ENCODE measurements at regions of chr17 and their contacts with region 1.

Region 1: GRCh38 chr17:28612936-28613872 is 781 bp downstream of the RSKR start:
- DNase-seq: peak in 1 of 5 donors; percentile 41
- H3K4me3 ChIP-seq: no peak overlapping the region
- H3K27ac ChIP-seq: no peak overlapping the region
- H3K4me1 ChIP-seq: no peaks in the 10 kb centered on the region
- H3K27me3 ChIP-seq: no peaks in the 10 kb centered on the region
- CTCF ChIP-seq: peak; percentile 12 to 48 (median 38)
- EP300 ChIP-seq: no peak
- POLR2A ChIP-seq: no peak

Region 2: DNA sequence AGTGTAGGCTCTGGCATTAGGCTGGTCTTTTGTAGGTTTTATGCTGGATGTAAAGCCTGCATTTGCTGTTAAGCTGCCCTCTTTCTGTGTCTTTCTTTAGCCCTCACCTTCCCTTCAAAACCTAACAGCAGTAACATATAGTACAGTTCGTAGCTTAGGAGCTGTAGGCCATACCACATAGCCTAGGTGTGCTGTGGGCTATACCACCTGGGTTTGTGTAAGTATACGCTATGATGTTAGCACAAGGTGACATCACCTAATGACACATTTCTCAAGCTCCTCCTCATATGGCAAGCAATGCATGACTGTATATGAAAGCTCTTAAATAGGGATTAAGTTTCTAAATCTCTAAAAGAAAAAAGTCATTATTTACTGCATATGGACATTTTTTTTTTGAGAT is 352.0 kb before region 1 on chr17:
- intact Hi-C with region 1: no loop called
- DNase-seq: no peak
- H3K4me3 ChIP-seq: no peak overlapping the region
- H3K27ac ChIP-seq: no peak overlapping the region
- H3K4me1 ChIP-seq: no peaks in the 10 kb centered on the region
- H3K27me3 ChIP-seq: no peaks in the 10 kb centered on the region
- CTCF ChIP-seq: no peak
- EP300 ChIP-seq: no peak
- POLR2A ChIP-seq: no peak

Region 3: DNA sequence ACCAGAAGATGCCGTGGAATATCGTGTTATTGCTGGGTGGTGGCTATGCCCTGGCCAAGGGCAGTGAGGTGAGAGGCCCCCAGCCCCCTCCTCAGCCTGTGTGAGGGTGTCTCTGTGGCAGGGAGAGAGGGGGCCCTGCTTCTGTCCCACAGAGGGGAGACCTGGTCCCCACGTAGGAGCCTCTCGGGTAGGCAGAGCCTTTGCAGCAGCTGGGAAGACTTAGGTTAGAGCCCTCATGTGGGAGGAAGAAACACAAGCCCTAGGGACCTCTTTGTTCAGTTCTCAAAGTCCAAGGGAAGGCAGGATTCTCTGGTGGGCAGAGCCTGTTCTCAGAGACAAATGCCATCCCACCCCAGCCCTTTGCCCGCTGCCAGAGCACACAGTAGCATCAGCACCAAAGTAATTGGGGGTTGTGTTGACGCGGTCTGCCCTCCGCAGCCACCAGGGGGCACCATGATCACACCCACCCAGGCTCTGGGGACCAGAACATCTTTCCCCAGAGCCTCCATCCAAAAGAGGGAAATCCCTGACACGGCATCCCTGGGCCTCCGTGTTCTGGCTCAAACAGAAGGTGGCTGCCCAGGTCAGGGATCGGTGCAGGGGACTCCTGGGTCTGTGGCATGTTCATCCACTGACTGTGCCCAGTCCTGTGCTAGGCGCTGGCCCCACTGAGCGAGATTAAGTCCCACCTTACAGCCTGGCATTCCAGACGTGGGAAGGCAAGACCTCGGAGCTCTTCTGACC is 118.6 kb before region 1 on chr17:
- intact Hi-C with region 1: loop called in 3 of 4 experiments (anchors 5 kb)
- DNase-seq: peak; percentile 49 to 83 (median 71)
- H3K4me3 ChIP-seq: no peak overlapping the region
- H3K27ac ChIP-seq: no peak overlapping the region
- H3K4me1 ChIP-seq: no peaks in the 10 kb centered on the region
- H3K27me3 ChIP-seq: no peaks in the 10 kb centered on the region
- CTCF ChIP-seq: peak; percentile 45 to 52 (median 47)
- EP300 ChIP-seq: no peak
- POLR2A ChIP-seq: no peak

Region 4: DNA sequence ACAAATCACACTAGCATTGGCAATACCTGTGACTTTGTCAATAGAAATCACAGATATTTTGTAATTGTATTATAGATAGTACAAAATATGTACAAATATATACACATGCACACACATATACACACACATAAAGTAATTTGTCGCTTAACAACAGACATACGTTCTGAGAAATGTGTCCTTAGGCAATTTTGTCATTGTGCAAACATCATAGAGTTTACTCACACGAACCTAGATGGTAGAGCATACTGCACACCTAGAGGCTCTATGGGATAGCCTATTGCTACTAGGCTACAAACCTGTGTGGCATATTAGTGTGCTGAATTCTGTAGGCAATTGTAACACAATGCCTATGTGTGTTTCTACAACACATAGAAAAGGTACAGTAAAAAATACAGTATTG is 71.8 kb before region 1 on chr17:
- intact Hi-C with region 1: no loop called
- DNase-seq: no peak
- H3K4me3 ChIP-seq: no peak overlapping the region
- H3K27ac ChIP-seq: no peak overlapping the region
- H3K4me1 ChIP-seq: no peaks in the 10 kb centered on the region
- H3K27me3 ChIP-seq: no peaks in the 10 kb centered on the region
- CTCF ChIP-seq: no peak
- EP300 ChIP-seq: no peak
- POLR2A ChIP-seq: no peak

Region 5: GRCh38 chr17:28554565-28554964 is 58.6 kb before region 1 on chr17:
- intact Hi-C with region 1: loop called in 1 of 4 experiments (anchors 2 kb)
- DNase-seq: no peak
- H3K4me3 ChIP-seq: no peak overlapping the region
- H3K27ac ChIP-seq: no peak overlapping the region
- H3K4me1 ChIP-seq: peaks cover 6% of the 10 kb centered on the region
- H3K27me3 ChIP-seq: no peaks in the 10 kb centered on the region
- CTCF ChIP-seq: no peak
- EP300 ChIP-seq: no peak
- POLR2A ChIP-seq: no peak

Region 6: DNA sequence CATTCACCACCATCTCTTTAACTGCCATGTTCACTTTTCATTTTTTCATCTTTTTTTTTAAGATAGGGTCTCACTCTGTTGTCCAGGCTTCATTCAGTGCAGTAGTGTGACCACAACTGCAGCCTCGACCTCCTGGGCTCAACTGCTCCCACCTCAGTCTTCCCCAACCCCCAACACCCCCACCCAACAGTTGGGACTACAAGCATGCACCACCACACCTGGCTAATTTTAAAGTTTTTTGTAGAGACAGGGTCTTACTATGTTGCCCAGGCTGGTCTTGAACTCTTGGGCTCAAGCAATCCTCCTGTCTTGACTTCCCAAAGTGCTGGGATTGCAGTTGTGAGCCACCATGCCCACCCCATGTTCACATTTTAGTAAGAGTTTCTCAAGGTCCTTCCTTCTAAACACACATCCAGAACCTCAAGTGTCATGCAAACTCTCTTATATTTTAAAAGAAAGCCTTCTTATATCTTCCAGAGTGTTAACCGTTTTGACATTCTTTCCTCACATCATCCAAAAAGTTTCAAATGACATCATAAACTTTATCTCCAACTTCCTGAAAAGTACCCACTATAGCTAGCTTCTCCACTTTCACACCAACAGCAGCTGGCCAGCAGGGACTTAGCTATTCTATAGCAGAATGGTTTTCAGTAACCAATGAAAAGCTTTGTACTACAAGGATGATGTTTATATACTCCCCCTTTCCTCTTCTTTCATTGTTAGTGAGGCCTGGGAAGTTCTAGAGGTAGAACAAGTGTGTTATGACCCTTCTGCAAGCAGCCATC is 179.9 kb after region 1 on chr17:
- intact Hi-C with region 1: no loop called
- DNase-seq: no peak
- H3K4me3 ChIP-seq: no peak overlapping the region
- H3K27ac ChIP-seq: no peak overlapping the region
- H3K4me1 ChIP-seq: no peaks in the 10 kb centered on the region
- H3K27me3 ChIP-seq: no peaks in the 10 kb centered on the region
- CTCF ChIP-seq: no peak
- EP300 ChIP-seq: no peak
- POLR2A ChIP-seq: no peak